ENCODE measurements at regions of chr3 and their contacts with region 1.

Region 1: GRCh38 chr3:186108941-186109865 is at the start of gene ETV5:
- DNase-seq: peak; percentile 94
- H3K4me3 ChIP-seq: peak within 1 kb of the TSS; percentile 67
- H3K27ac ChIP-seq: no peak within 1 kb of the TSS
- H3K4me1 ChIP-seq: peaks cover 24% of the 10 kb centered on the region
- CTCF ChIP-seq: no peak
- total RNA-seq, gene ETV5: 0.85 TPM in 1 of 2 replicates, not detected in the other

Region 2: GRCh38 chr3:185983495-185984141 is 125.6 kb before region 1 on chr3:
- CTCF ChIA-PET with region 1: no interaction called
- POLR2A ChIA-PET with region 1: no interaction called
- intact Hi-C with region 1: loop called (anchors 10 kb)
- DNase-seq: peak; percentile 57
- H3K4me3 ChIP-seq: no peak overlapping the region
- H3K27ac ChIP-seq: no peak overlapping the region
- H3K4me1 ChIP-seq: peaks cover 9% of the 10 kb centered on the region
- CTCF ChIP-seq: peak; percentile 96

Region 3: DNA sequence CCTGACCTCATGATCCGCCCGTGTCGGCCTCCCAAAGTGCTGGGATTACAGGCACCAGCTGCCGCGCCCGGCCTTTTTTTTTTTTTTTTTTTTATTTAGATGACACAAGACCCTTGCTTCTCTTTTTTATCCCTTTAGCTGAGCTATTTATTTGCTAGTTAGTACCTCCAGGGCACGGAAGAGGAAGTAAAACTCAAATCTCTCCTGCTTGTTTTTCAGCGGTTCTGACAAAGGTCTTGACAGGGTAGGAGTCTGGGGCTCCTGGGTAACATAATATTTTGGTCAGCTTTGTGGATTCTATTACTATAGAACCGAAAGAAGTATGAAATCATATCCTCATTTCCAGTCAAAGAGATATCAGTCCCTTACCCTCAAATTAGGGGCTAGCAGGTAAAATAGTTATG is 43.7 kb after region 1 on chr3:
- CTCF ChIA-PET with region 1: interaction called, 3 read pairs
- POLR2A ChIA-PET with region 1: interaction called, 4 read pairs
- intact Hi-C with region 1: loop called (anchors 2 kb)
- DNase-seq: peak; percentile 89
- H3K4me3 ChIP-seq: peak overlapping the region; percentile 45
- H3K27ac ChIP-seq: peak overlapping the region; percentile 88
- H3K4me1 ChIP-seq: peaks cover 47% of the 10 kb centered on the region
- CTCF ChIP-seq: no peak

Region 4: GRCh38 chr3:186209810-186210752 is 100.9 kb after region 1 on chr3:
- CTCF ChIA-PET with region 1: no interaction called
- POLR2A ChIA-PET with region 1: interaction called, 3 read pairs
- intact Hi-C with region 1: loop called (anchors 1 kb)
- DNase-seq: peak; percentile 46
- H3K4me3 ChIP-seq: no peak overlapping the region
- H3K27ac ChIP-seq: no peak overlapping the region
- H3K4me1 ChIP-seq: peaks cover 23% of the 10 kb centered on the region
- CTCF ChIP-seq: no peak

Region 5: DNA sequence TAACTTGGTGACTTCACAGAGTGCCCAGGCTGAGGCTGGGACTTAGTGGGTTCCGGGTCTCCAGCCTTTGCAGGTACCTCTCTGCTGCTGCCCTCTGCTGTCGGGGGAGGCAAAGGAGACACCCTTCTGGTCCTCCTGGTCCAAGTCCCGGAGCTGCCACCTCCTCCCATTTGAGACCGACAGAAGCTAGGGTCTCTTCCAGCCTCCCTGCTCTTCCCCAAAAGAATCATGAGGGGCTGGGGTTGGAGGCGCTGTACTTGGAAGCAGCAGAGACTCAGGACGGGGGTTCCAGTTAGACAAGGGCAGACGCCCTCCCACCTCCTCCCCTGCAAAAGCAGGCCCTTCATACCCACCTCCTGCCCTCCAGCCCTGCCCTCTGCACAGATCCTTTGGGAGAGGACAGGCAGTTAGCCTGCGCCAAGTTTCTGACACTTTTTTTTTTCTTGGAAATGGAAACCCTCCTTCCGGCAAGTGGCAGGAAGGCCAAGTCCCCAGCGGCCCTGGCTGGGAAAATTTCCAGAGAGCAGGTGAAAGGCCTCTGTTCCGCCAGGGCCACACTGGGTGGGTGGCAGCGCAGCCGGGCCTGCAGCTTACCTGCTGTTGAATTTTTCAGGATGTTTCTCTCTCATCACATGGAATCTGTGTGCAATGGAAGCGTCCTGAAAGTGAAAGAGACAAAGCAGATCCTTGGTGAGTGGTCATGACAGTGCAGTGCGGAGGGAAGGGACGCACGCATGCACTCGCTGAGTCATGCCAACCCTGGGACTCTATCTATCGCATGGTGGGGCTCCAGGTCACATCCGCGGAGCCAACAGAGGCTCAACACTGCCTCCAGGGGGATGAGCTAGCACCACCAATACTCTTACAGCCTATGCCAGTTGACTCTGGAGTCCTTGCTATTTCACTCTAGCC is 133.0 kb after region 1 on chr3:
- CTCF ChIA-PET with region 1: no interaction called
- POLR2A ChIA-PET with region 1: no interaction called
- intact Hi-C with region 1: loop called (anchors 2 kb)
- DNase-seq: peak; percentile 78
- H3K4me3 ChIP-seq: no peak overlapping the region
- H3K27ac ChIP-seq: no peak overlapping the region
- H3K4me1 ChIP-seq: peaks cover 16% of the 10 kb centered on the region
- CTCF ChIP-seq: peak; percentile 85